ENCODE measurements at regions of chr19 and their contacts with region 1.

Region 1: GRCh38 chr19:33176670-33177416 is 17.3 kb upstream of the LRP3 start:
- DNase-seq: peak; percentile 100
- ATAC-seq: peak; percentile 84 to 94
- H3K4me3 ChIP-seq: peak overlapping the region; percentile 65
- H3K27ac ChIP-seq: peak overlapping the region; percentile 89 to 91
- H3K4me1 ChIP-seq: peaks cover 19% of the 10 kb centered on the region
- CTCF ChIP-seq: no peak
- EP300 ChIP-seq: no peak
- POLR2A ChIP-seq: peak; percentile 100
- RAD21 ChIP-seq: 0 out of 5 replicates have a peak, but pooled peaks of 1 of the 2 experiments have one; percentile 16

Region 2: DNA sequence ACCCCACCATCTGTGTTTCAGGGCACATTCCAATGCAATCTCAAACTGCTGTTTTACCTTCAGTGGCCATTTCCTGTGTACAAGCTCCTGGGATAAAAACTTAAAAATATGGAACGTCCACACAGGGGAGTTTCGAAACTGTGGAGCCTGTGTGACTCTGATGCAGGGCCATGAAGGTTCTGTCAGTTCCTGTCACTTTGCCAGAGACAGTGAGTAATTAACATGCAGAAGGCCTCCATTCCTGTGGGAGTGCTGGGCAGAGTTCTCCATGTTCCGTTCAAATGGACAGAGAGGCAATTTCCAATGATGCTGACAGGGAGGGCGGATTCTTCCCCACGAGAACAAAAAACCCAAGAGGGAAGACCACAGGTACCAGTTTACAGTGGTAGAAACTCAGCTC is 20.5 kb before region 1 on chr19:
- CTCF ChIA-PET with region 1: interaction called, 162 read pairs
- POLR2A ChIA-PET with region 1: interaction called, 28 read pairs
- DNase-seq: no peak
- ATAC-seq: peak in 1 of 2 experiments; percentile 26; a peak in 1 of 6 replicates
- H3K4me3 ChIP-seq: no peak overlapping the region
- H3K27ac ChIP-seq: no peak overlapping the region
- H3K4me1 ChIP-seq: peaks cover 7% of the 10 kb centered on the region; the same call in 2 of the 3 replicates
- CTCF ChIP-seq: no peak
- EP300 ChIP-seq: no peak
- POLR2A ChIP-seq: no peak
- RAD21 ChIP-seq: no peak

Region 3: DNA sequence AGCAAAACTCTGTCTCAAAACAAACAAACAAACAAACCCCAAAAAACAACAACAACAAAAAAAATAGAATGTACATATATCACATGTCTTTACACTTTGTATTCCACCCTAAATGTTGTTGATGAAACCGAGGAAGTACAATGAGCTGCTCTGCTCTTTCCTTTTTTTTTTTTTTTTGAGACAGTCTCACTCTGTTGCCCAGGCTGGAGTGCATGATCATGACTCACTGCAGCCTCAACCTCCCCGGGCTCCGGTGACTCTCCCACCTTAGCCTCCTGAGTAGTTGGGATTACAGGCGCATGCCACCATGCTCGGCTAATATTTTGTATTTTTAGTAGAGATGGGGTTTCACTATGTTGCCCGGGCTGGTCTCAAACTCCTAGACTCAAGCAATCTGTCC is 13.4 kb before region 1 on chr19:
- CTCF ChIA-PET with region 1: interaction called, 113 read pairs
- POLR2A ChIA-PET with region 1: interaction called, 28 read pairs
- DNase-seq: no peak
- ATAC-seq: no peak
- H3K4me3 ChIP-seq: no peak overlapping the region
- H3K27ac ChIP-seq: no peak overlapping the region
- H3K4me1 ChIP-seq: no peaks in the 10 kb centered on the region
- CTCF ChIP-seq: no peak
- EP300 ChIP-seq: no peak
- POLR2A ChIP-seq: no peak
- RAD21 ChIP-seq: no peak

Region 4: GRCh38 chr19:33193865-33194362 is 17.1 kb after region 1 on chr19 and contains the start of gene LRP3:
- CTCF ChIA-PET with region 1: interaction called, 279 read pairs
- POLR2A ChIA-PET with region 1: interaction called, 20 read pairs
- DNase-seq: peak in 1 of 2 experiments; percentile 55
- ATAC-seq: peak; percentile 59 to 64
- H3K4me3 ChIP-seq: peak within 1 kb of the TSS; percentile 69
- H3K27ac ChIP-seq: peak within 1 kb of the TSS; percentile 71 to 91
- H3K4me1 ChIP-seq: peaks cover 10% of the 10 kb centered on the region; the same call in 2 of the 3 replicates
- CTCF ChIP-seq: no peak
- EP300 ChIP-seq: no peak
- POLR2A ChIP-seq: peak; percentile 36; the same call in 1 of the 2 replicates
- RAD21 ChIP-seq: no peak
- polyA plus RNA-seq, gene LRP3: 10.9 and 16.1 TPM in 2 replicates

Region 5: GRCh38 chr19:33267706-33268105 is 90.9 kb after region 1 on chr19:
- CTCF ChIA-PET with region 1: no interaction called
- POLR2A ChIA-PET with region 1: no interaction called
- DNase-seq: no peak
- ATAC-seq: peak in 1 of 2 experiments; percentile 11; a peak in 2 of 6 replicates
- H3K4me3 ChIP-seq: no peak overlapping the region
- H3K27ac ChIP-seq: no peak overlapping the region
- H3K4me1 ChIP-seq: no peaks in the 10 kb centered on the region
- CTCF ChIP-seq: no peak
- EP300 ChIP-seq: no peak
- POLR2A ChIP-seq: no peak
- RAD21 ChIP-seq: no peak